IMR-90 (cell line): ENCODE measurements at regions of chr4 and their contacts with region 1.

Region 1: DNA sequence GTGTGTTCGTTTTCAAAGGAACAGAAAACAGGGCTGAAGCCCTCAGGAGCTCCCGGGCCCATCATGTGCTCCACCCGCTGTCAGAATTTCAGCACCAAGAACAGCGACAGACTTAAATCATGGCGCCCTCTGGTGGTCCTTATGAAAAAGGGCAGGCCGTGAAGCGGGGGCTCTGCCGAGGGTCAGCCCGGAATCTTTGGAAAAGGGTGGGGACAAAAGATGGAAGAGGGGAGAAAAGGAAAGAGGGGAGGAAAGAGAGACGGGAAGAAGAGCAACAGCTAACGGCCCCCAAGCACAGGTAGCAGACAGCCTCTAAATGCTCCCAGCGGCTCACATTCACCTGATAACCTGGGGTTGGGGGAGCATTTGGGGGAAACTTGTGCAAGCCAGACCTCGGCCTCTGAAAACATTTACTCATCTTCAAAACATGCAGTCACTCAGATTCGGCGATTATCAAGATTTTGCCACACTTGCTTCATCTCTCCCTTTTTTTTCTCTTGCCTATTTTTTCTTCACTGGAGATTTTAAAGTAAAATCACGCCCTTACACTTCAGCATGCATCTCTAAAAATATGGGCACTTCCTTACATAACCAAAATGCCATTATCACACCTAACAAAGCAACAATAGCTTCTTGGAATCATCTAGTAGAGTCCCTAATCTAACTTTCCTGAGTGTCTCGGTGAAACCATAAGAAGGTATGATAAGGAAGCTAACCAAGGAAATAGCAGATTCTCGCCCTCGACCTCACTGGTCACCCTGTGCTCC is 28.1 kb upstream of the MAN2B2 start:
- DNase-seq: peak; percentile 72
- ATAC-seq: peak; percentile 93
- H3K4me3 ChIP-seq: no peak overlapping the region
- H3K27ac ChIP-seq: no peak overlapping the region
- H3K4me1 ChIP-seq: no peaks in the 10 kb centered on the region
- H3K27me3 ChIP-seq: peaks cover 3% of the 10 kb centered on the region; the same call in 1 of the 2 replicates
- CTCF ChIP-seq: peak; percentile 86
- POLR2A ChIP-seq: no peak
- RAD21 ChIP-seq: peak; percentile 55

Region 2: DNA sequence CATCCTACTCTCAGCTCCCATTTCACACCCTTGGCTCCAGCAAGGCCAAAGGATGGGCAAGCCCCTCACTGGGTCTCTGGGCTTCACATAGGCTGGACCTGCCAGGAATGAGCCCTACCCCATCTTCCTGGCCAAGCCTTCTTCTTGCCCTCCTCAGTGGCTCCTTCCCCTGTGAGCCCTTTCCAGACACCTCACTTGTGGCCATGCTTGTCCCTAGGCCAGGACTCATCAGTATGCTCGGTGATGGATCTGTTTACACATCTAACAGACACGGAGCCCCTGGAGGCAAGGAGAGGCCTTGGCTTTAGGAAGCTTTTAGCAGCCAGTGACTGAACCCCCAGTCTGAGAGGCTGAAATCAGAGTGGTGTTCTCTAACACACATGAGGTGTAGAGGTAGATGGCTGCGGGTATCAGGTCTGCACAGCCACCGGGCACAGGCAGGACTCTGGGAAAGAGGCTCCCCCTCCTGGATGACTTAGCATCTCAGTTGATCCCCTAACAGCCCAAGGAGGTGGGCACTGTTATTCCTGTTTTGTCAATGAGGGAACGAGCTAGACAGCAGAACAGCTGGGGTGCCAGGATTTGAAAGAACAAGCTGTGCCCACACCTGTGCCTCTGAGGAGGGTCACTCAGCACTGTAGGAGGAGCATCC is 119.3 kb before region 1 on chr4:
- CTCF ChIA-PET with region 1: no interaction called
- POLR2A ChIA-PET with region 1: no interaction called
- dilution Hi-C with region 1: no loop called
- in situ Hi-C with region 1: no loop called
- intact Hi-C with region 1: no loop called
- DNase-seq: no peak
- ATAC-seq: no peak
- H3K4me3 ChIP-seq: no peak overlapping the region
- H3K27ac ChIP-seq: no peak overlapping the region
- H3K4me1 ChIP-seq: no peaks in the 10 kb centered on the region
- H3K27me3 ChIP-seq: no peaks in the 10 kb centered on the region; the same call in 1 of the 2 replicates
- CTCF ChIP-seq: no peak
- POLR2A ChIP-seq: no peak
- RAD21 ChIP-seq: no peak

Region 3: GRCh38 chr4:6560416-6561172 is 13.7 kb after region 1 on chr4:
- CTCF ChIA-PET with region 1: interaction called, 10 read pairs
- POLR2A ChIA-PET with region 1: no interaction called
- dilution Hi-C with region 1: no loop called
- in situ Hi-C with region 1: no loop called
- intact Hi-C with region 1: no loop called
- DNase-seq: peak; percentile 64
- ATAC-seq: peak; percentile 58
- H3K4me3 ChIP-seq: no peak overlapping the region
- H3K27ac ChIP-seq: no peak overlapping the region
- H3K4me1 ChIP-seq: peaks cover 3% of the 10 kb centered on the region; the same call in 1 of the 2 replicates
- H3K27me3 ChIP-seq: peaks cover 81% of the 10 kb centered on the region
- CTCF ChIP-seq: no peak
- POLR2A ChIP-seq: no peak
- RAD21 ChIP-seq: no peak